Right lobe of liver (tissue), 6 donors: ENCODE measurements at regions of chr7 and their contacts with region 1.

Region 1: GRCh38 chr7:95527033-95527775 is 41.5 kb downstream of the ASB4 start:
- DNase-seq: peak in 2 of 3 donors; percentile 27 to 65
- ATAC-seq: peak; percentile 90 to 95 (median 92)
- H3K4me3 ChIP-seq: no peak overlapping the region
- H3K27ac ChIP-seq: no peak overlapping the region
- H3K4me1 ChIP-seq: peaks cover 0 to 5% (median 0%) of the 10 kb centered on the region in 4 donors
- H3K27me3 ChIP-seq: no peaks in the 10 kb centered on the region
- CTCF ChIP-seq: peak; percentile 86 to 95 (median 93)
- POLR2A ChIP-seq: no peak

Region 2: DNA sequence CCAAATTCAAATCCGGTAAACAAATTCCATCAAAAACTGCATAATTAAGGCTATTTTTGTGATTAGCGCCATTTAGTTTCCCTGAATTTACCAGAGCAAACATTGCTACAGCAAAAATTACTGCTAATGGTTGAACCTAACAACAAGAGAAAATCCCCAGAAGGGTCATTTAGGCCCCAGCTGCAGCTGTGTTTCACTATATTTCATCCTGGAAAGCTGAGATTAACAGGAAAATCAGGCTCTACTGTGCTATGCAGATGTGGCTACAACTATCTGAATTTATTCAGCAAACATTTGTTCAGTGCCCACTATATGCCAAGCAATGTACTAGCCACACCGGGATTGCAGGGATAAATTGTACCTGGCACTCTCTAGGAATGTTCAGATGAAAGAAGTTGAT is 306.9 kb before region 1 on chr7:
- intact Hi-C with region 1: no loop called
- DNase-seq: no peak
- ATAC-seq: no peak
- H3K4me3 ChIP-seq: no peak overlapping the region
- H3K27ac ChIP-seq: no peak overlapping the region
- H3K4me1 ChIP-seq: no peaks in the 10 kb centered on the region
- H3K27me3 ChIP-seq: no peaks in the 10 kb centered on the region
- CTCF ChIP-seq: no peak
- POLR2A ChIP-seq: no peak

Region 3: GRCh38 chr7:95686109-95686508 is 158.9 kb after region 1 on chr7:
- intact Hi-C with region 1: loop called (anchors 5 kb)
- DNase-seq: peak in 2 of 3 donors; percentile 21 to 62
- ATAC-seq: peak; percentile 75 to 82 (median 79)
- H3K4me3 ChIP-seq: no peak overlapping the region
- H3K27ac ChIP-seq: no peak overlapping the region
- H3K4me1 ChIP-seq: no peaks in the 10 kb centered on the region
- H3K27me3 ChIP-seq: no peaks in the 10 kb centered on the region
- CTCF ChIP-seq: peak; percentile 44 to 70 (median 52)
- POLR2A ChIP-seq: no peak